Naive thymus-derived CD4-positive, alpha-beta T cell (primary cell): ENCODE measurements at regions of chr6 and their contacts with region 1.

Region 1: GRCh38 chr6:136226027-136226673 is 24.0 kb downstream of the MTFR2 start:
- DNase-seq: peak; percentile 25 to 68 (median 57)
- ATAC-seq: peak; percentile 95
- H3K4me3 ChIP-seq: no peak overlapping the region
- H3K4me3 Mint-ChIP-seq: peak overlapping the region in 9 of 10 donors; percentile 4 to 73 (median 60)
- H3K27ac ChIP-seq: no peak overlapping the region
- H3K27ac Mint-ChIP-seq: peak overlapping the region in 1 of 9 donors; percentile 6
- H3K4me1 ChIP-seq: no peaks in the 10 kb centered on the region
- H3K4me1 Mint-ChIP-seq: peaks cover 0 to 23% (median 6%) of the 10 kb centered on the region in 7 donors
- H3K27me3 ChIP-seq: no peaks in the 10 kb centered on the region
- H3K27me3 Mint-ChIP-seq: no peaks in the 10 kb centered on the region

Region 2: GRCh38 chr6:135451693-135452092 is 774.5 kb before region 1 on chr6:
- CTCF ChIA-PET with region 1: interaction called, 7 read pairs
- POLR2A ChIA-PET with region 1: no interaction called
- intact Hi-C with region 1: loop called (anchors 1 kb)
- DNase-seq: peak in 6 of 9 donors; percentile 13 to 54 (median 44)
- ATAC-seq: peak; percentile 63
- H3K4me3 ChIP-seq: no peak overlapping the region
- H3K4me3 Mint-ChIP-seq: no peak overlapping the region
- H3K27ac ChIP-seq: no peak overlapping the region
- H3K27ac Mint-ChIP-seq: no peak overlapping the region
- H3K4me1 ChIP-seq: no peaks in the 10 kb centered on the region
- H3K4me1 Mint-ChIP-seq: peaks cover 0 to 4% (median 0%) of the 10 kb centered on the region in 7 donors
- H3K27me3 ChIP-seq: no peaks in the 10 kb centered on the region
- H3K27me3 Mint-ChIP-seq: no peaks in the 10 kb centered on the region

Region 3: GRCh38 chr6:135506270-135506997 is 719.7 kb before region 1 on chr6:
- CTCF ChIA-PET with region 1: interaction called, 13 read pairs
- POLR2A ChIA-PET with region 1: no interaction called
- intact Hi-C with region 1: loop called (anchors 1 kb)
- DNase-seq: peak in 7 of 9 donors; percentile 7 to 53 (median 33)
- ATAC-seq: peak; percentile 90
- H3K4me3 ChIP-seq: no peak overlapping the region
- H3K4me3 Mint-ChIP-seq: no peak overlapping the region
- H3K27ac ChIP-seq: no peak overlapping the region
- H3K27ac Mint-ChIP-seq: peak overlapping the region in 1 of 9 donors; percentile 33
- H3K4me1 ChIP-seq: peaks cover 0 to 6% of the 10 kb centered on the region in 2 donors
- H3K4me1 Mint-ChIP-seq: peaks cover 0 to 14% (median 0%) of the 10 kb centered on the region in 7 donors
- H3K27me3 ChIP-seq: no peaks in the 10 kb centered on the region
- H3K27me3 Mint-ChIP-seq: peaks cover 0 to 2% (median 0%) of the 10 kb centered on the region in 5 donors

Region 4: GRCh38 chr6:135851442-135852271 is 374.5 kb before region 1 on chr6 and contains the start of gene PDE7B:
- CTCF ChIA-PET with region 1: no interaction called
- POLR2A ChIA-PET with region 1: no interaction called
- intact Hi-C with region 1: loop called in 1 of 2 experiments (anchors 5 kb)
- DNase-seq: peak; percentile 18 to 73 (median 46)
- ATAC-seq: peak; percentile 94
- H3K4me3 ChIP-seq: peak within 1 kb of the TSS; percentile 53
- H3K4me3 Mint-ChIP-seq: peak within 1 kb of the TSS in 9 of 10 donors; percentile 71 to 90 (median 87)
- H3K27ac ChIP-seq: peak within 1 kb of the TSS; percentile 75
- H3K27ac Mint-ChIP-seq: peak within 1 kb of the TSS in 6 of 9 donors; percentile 78 to 96 (median 88)
- H3K4me1 ChIP-seq: peaks cover 0 to 23% of the 10 kb centered on the region in 2 donors
- H3K4me1 Mint-ChIP-seq: peaks cover 5 to 47% (median 36%) of the 10 kb centered on the region in 7 donors
- H3K27me3 ChIP-seq: no peaks in the 10 kb centered on the region
- H3K27me3 Mint-ChIP-seq: no peaks in the 10 kb centered on the region
- total RNA-seq, gene PDE7B: 0.37 to 18.7 (median 1.7) TPM

Region 5: GRCh38 chr6:136031982-136032381 is 194.2 kb before region 1 on chr6:
- CTCF ChIA-PET with region 1: no interaction called
- POLR2A ChIA-PET with region 1: no interaction called
- intact Hi-C with region 1: loop called (anchors 1 to 5 kb)
- DNase-seq: peak in 3 of 9 donors; percentile 6 to 7 (median 7)
- ATAC-seq: no peak
- H3K4me3 ChIP-seq: no peak overlapping the region
- H3K4me3 Mint-ChIP-seq: no peak overlapping the region
- H3K27ac ChIP-seq: no peak overlapping the region
- H3K27ac Mint-ChIP-seq: no peak overlapping the region
- H3K4me1 ChIP-seq: no peaks in the 10 kb centered on the region
- H3K4me1 Mint-ChIP-seq: peaks cover 0 to 7% (median under 1%) of the 10 kb centered on the region in 7 donors
- H3K27me3 ChIP-seq: no peaks in the 10 kb centered on the region
- H3K27me3 Mint-ChIP-seq: peaks cover 0 to 3% (median 0%) of the 10 kb centered on the region in 5 donors

Region 6: DNA sequence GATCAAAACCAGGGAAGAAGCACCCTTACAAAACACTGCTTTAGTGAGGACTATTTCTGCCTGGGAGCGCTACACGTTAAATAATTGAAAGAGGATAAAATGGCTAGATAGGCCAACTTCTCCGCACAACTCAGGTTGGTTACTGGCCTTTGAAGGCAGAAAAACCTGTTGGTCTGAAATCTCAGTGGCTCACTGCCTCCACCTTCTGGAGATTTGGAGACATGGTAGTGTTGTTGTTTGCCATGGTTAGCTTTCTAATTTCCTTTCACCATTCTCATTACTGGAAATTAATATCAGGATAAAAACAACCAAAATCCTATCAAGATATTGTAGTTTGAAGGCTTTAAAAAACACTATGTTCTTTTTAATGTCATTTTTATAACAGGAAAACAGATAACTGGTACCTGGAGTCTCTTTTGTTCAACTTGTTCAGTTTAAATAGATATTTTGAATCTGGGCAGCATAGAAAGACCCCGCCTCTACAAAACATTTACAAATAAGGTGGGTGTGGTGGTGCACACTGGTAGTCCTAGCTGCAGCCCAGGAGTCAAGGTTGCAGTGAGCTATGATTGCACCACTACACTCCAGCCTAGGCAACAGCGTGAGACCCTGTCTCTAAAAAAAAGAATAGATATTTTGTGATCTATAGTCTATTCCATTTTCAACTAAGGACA is 91.0 kb after region 1 on chr6:
- CTCF ChIA-PET with region 1: interaction called, 3 read pairs
- POLR2A ChIA-PET with region 1: no interaction called
- intact Hi-C with region 1: loop called in 1 of 2 experiments (anchors 1 kb)
- DNase-seq: peak; percentile 25 to 77 (median 66)
- ATAC-seq: peak; percentile 91
- H3K4me3 ChIP-seq: no peak overlapping the region
- H3K4me3 Mint-ChIP-seq: no peak overlapping the region
- H3K27ac ChIP-seq: no peak overlapping the region
- H3K27ac Mint-ChIP-seq: peak overlapping the region in 1 of 9 donors; percentile 19
- H3K4me1 ChIP-seq: no peaks in the 10 kb centered on the region
- H3K4me1 Mint-ChIP-seq: peaks cover 0 to 5% (median 0%) of the 10 kb centered on the region in 7 donors
- H3K27me3 ChIP-seq: no peaks in the 10 kb centered on the region
- H3K27me3 Mint-ChIP-seq: peaks cover 0 to 19% (median 0%) of the 10 kb centered on the region in 5 donors

Region 7: DNA sequence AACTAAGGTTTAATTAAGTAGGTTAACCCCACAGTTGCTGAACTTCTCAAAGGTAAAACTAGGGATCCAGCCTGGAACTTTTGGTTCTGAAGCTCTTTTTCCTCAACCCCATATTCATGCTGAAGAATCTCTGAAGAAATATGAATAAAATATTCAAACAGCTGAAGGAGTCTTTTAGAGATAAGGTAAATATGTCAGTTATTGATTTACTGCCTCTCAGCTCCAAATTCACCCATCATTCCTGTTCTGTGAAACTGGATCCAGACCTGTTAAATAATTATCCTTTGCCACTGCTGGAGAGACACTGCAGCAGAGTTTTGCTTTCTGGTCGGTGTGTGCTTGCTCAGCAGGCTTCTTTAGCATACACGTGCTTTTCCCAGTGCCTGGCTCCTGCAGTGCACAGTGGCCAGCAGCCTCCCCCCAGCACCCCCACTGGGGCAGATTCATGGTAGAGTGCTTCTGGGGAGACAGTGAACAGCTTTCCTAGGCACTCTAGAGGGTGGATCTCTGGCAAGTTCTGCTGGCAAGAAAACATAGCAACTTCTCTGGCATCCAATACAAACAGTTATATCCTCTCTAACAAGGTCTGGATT is 125.5 kb after region 1 on chr6:
- CTCF ChIA-PET with region 1: no interaction called
- POLR2A ChIA-PET with region 1: no interaction called
- intact Hi-C with region 1: no loop called
- DNase-seq: no peak
- ATAC-seq: no peak
- H3K4me3 ChIP-seq: no peak overlapping the region
- H3K4me3 Mint-ChIP-seq: no peak overlapping the region
- H3K27ac ChIP-seq: no peak overlapping the region
- H3K27ac Mint-ChIP-seq: peak overlapping the region in 1 of 9 donors; percentile 26
- H3K4me1 ChIP-seq: no peaks in the 10 kb centered on the region
- H3K4me1 Mint-ChIP-seq: peaks cover 0 to 3% (median 0%) of the 10 kb centered on the region in 7 donors
- H3K27me3 ChIP-seq: no peaks in the 10 kb centered on the region
- H3K27me3 Mint-ChIP-seq: peaks cover 0 to 32% (median 0%) of the 10 kb centered on the region in 5 donors